Heart right ventricle (tissue), 16 donors: ENCODE measurements at regions of chr18 and their contacts with region 1.

Region 1: GRCh38 chr18:58043491-58044379 is at the start of gene NEDD4L:
- DNase-seq: peak; percentile 79 to 81
- ATAC-seq: peak; percentile 87 to 95 (median 91)
- H3K4me3 ChIP-seq: peak within 1 kb of the TSS; percentile 71 to 92 (median 86)
- H3K27ac ChIP-seq: peak within 1 kb of the TSS; percentile 45 to 88 (median 76)
- H3K4me1 ChIP-seq: peaks cover 4 to 30% (median 17%) of the 10 kb centered on the region in 9 donors
- H3K27me3 ChIP-seq: peaks cover 0 to 27% (median 0%) of the 10 kb centered on the region in 7 donors
- CTCF ChIP-seq: peak; percentile 73 to 91 (median 86)
- total RNA-seq, gene NEDD4L: 37.1 to 67.1 (median 50.2) TPM

Region 2: DNA sequence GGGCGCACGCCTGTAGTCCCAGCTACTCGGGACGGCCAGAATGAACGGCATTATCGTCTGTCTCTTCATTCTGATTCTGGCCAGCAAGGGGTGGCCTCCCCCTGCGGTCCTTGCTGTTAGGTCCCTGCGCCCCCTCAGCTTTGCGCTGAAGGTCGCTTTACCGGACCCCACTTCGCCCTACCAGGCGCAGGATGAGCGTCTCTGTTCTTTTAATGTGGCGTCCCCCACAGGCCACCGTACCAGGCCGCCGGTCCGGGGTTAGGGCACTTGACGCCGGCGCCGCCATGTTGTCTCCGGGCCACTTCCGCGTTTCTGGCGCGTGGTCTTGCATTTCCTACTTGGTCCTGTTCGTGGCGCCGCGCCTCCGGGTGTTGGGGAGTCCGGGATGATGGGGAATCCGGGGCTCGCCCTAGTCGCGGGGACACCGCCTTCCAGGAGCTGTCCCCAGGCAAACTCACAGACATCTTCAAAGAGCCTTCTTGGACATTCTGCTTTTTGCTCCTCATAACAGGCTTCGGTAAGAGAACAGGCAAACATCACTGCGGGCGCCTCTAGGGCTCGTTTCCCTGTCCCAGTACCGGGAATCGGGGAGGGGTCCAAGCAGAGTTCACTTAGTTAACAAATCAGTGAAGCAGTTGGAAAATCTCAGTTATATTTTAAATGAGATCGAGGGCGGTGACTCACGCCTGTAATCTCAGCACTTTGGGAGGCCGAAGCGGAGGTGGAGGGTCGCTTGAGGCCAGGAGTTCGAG is 413.6 kb before region 1 on chr18:
- intact Hi-C with region 1: loop called in 5 of 10 experiments (anchors 5 to 10 kb)
- DNase-seq: peak; percentile 97
- ATAC-seq: peak; percentile 97 to 100 (median 99)
- H3K4me3 ChIP-seq: peak overlapping the region; percentile 50 to 77 (median 64)
- H3K27ac ChIP-seq: peak overlapping the region in 9 of 10 donors; percentile 71 to 91 (median 77)
- H3K4me1 ChIP-seq: peaks cover 0 to 19% (median 7%) of the 10 kb centered on the region in 9 donors
- H3K27me3 ChIP-seq: no peaks in the 10 kb centered on the region
- CTCF ChIP-seq: peak; percentile 39 to 92 (median 78)

Region 3: GRCh38 chr18:57881818-57882413 is 161.8 kb before region 1 on chr18:
- intact Hi-C with region 1: loop called in 2 of 10 experiments (anchors 10 kb)
- DNase-seq: peak; percentile 19 to 75
- ATAC-seq: peak in 7 of 8 donors; percentile 77 to 92 (median 89)
- H3K4me3 ChIP-seq: no peak overlapping the region
- H3K27ac ChIP-seq: no peak overlapping the region
- H3K4me1 ChIP-seq: peaks cover 0 to 4% (median 0%) of the 10 kb centered on the region in 9 donors
- H3K27me3 ChIP-seq: no peaks in the 10 kb centered on the region
- CTCF ChIP-seq: peak; percentile 69 to 93 (median 89)

Region 4: DNA sequence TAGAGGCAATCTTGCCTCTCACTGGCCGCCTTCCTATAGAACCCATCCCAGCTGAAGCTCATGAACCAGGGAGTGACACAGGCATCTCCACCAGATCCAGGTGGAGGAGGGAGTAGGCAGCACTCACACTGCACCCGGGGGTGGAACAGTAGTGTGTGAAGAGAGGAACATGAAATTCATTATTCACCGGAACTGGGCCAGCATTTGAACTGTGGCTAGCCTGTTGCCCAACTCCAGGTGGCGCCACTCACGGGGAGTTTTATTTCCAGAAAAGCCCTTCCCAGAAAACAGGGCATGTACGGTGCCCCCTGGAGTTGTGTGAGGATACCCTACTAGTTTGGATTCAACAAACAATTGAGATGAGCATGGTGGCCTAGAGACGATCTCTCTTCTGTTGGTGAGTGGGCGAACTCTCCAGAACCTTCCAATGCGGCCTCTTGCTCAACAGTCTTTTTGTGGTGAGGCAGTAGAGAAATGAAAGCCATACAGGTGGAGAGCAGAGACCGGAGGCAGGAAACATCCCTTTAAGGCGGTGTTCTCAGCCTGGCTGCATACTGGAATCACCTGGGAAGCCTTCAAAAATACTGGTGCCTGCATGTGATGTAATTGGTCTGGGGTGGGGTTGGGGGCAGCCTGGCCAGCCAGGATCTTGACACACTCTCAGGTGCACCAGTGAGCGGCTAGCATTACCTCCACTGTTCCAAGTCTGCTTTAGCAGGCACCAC is 73.2 kb before region 1 on chr18:
- intact Hi-C with region 1: no loop called
- DNase-seq: no peak
- ATAC-seq: no peak
- H3K4me3 ChIP-seq: no peak overlapping the region
- H3K27ac ChIP-seq: no peak overlapping the region
- H3K4me1 ChIP-seq: no peaks in the 10 kb centered on the region
- H3K27me3 ChIP-seq: no peaks in the 10 kb centered on the region
- CTCF ChIP-seq: no peak

Region 5: GRCh38 chr18:58128381-58129374 is 84.9 kb after region 1 on chr18:
- intact Hi-C with region 1: loop called in 5 of 10 experiments (anchors 2 to 5 kb)
- DNase-seq: no peak
- ATAC-seq: no peak
- H3K4me3 ChIP-seq: no peak overlapping the region
- H3K27ac ChIP-seq: no peak overlapping the region
- H3K4me1 ChIP-seq: no peaks in the 10 kb centered on the region
- H3K27me3 ChIP-seq: no peaks in the 10 kb centered on the region
- CTCF ChIP-seq: no peak

Region 6: DNA sequence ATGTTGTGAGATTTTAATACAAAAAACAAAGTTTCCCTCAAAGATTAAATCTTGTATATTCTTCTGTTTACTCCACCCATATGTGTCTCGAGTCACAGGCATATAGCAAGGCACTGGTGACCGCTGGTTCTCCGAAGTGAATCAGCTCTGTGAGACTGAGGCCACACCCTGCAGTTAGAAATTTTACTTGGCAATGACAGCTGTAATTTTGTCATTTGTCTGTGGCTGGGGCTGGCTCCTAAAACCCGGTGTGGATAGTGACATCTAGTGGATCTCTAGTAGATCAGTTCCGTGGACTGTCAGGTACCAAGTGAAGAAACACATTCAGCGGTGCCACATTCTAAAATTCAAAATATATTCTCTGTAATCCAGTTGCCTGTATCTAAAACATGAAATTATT is 278.3 kb after region 1 on chr18:
- intact Hi-C with region 1: loop called in 5 of 10 experiments (anchors 5 to 10 kb)
- DNase-seq: peak; percentile 35 to 79
- ATAC-seq: peak; percentile 90 to 97 (median 94)
- H3K4me3 ChIP-seq: peak overlapping the region in 4 of 10 donors; percentile 8 to 22 (median 14)
- H3K27ac ChIP-seq: peak overlapping the region in 8 of 10 donors; percentile 32 to 61 (median 47)
- H3K4me1 ChIP-seq: peaks cover 0 to 28% (median 14%) of the 10 kb centered on the region in 9 donors
- H3K27me3 ChIP-seq: no peaks in the 10 kb centered on the region
- CTCF ChIP-seq: peak; percentile 38 to 80 (median 61)